Testis (tissue), 5 donors: ENCODE measurements at regions of chr17 and their contacts with region 1.

Region 1: DNA sequence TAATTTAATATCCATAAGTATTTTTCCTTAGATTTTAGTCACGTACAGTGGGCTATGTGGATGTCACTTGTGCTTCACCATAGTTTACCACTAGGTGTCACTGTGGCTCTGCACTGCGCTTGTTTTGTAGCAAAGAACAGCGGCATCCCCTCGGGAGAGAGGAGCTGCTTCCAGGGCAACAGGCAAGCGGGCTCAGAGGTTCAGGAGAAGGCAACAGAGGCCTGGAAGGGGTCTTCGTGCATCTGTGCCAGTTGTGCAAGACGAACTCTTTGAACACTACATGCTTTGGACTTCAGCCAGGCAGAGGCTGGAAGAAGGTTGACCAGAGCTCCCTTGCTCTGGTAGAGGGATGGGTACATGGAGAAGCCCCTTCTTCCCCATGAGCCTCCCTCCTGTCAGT is 20.6 kb downstream of the CYB561 start:
- DNase-seq: peak; percentile 89
- H3K4me3 ChIP-seq: no peak overlapping the region
- H3K27ac ChIP-seq: no peak overlapping the region
- H3K4me1 ChIP-seq: no peaks in the 10 kb centered on the region
- H3K27me3 ChIP-seq: no peaks in the 10 kb centered on the region
- CTCF ChIP-seq: peak; percentile 88 to 92 (median 92)
- POLR2A ChIP-seq: no peak

Region 2: GRCh38 chr17:63113183-63113582 is 312.3 kb before region 1 on chr17:
- intact Hi-C with region 1: no loop called
- DNase-seq: no peak
- H3K4me3 ChIP-seq: no peak overlapping the region
- H3K27ac ChIP-seq: no peak overlapping the region
- H3K4me1 ChIP-seq: peaks cover 2% of the 10 kb centered on the region
- H3K27me3 ChIP-seq: no peaks in the 10 kb centered on the region
- CTCF ChIP-seq: no peak
- POLR2A ChIP-seq: no peak

Region 3: DNA sequence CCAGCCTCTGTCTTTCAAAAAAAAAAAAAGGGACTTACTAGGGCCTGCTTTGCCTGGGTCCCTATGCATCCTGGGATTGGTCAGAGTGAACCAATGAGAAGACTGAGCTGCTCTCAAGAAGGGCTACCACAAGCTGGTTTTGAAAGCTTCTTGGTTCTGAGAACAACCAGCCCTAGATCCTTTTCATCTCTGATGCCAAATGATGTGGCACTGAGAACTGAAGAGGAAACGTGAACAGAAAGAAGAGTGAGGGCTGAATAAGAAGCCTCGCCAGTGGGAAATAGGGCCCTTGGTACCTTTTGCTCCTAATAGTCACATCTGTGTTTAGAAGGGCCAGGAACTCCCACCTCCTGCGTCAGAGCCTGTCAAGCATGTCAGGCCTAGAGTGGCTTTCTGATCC is 185.9 kb after region 1 on chr17:
- intact Hi-C with region 1: loop called (anchors 5 kb)
- DNase-seq: no peak
- H3K4me3 ChIP-seq: no peak overlapping the region
- H3K27ac ChIP-seq: no peak overlapping the region
- H3K4me1 ChIP-seq: peaks cover 11% of the 10 kb centered on the region
- H3K27me3 ChIP-seq: no peaks in the 10 kb centered on the region
- CTCF ChIP-seq: no peak
- POLR2A ChIP-seq: no peak